Dorsolateral prefrontal cortex (tissue), 120 donors: ENCODE measurements at regions of chr11 and their contacts with region 1.

Region 1: DNA sequence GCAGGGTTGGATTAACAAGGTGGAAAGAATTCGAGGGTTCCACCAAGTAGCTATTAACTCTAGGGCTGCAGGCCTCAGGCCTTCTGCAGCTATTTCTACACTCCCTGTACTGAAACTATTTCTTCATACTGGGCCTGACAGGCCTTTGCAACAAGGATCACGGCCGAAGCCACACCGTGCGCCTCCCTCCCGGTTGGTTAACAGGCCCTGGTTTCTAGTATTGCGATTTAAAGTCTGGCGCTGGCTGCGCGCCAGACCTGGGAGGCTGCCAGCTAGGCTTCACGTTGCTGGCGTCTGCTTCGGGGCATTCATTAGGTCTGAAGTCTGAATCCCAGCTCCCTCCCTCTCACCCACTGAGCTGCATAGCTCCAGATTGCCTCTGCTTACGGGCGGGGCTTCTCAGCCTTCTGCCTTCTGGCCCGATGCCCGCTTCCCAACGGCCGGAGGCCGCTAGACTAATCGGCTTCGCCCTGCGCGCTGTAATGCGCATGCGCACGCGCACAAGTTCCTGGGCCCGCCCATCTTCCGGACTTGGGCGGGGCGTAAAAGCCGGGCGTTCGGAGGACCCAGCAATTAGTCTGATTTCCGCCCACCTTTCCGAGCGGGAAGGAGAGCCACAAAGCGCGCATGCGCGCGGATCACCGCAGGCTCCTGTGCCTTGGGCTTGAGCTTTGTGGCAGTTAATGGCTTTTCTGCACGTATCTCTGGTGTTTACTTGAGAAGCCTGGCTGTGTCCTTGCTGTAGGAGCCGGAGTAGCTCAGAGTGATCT is 1.6 kb downstream of the LDHA start:
- DNase-seq: peak; percentile 92 to 98 (median 96)
- H3K4me3 ChIP-seq: peak overlapping the region; percentile 65 to 97 (median 87)
- H3K27ac ChIP-seq: peak overlapping the region; percentile 32 to 98 (median 92)
- H3K27me3 ChIP-seq: no peaks in the 10 kb centered on the region
- CTCF ChIP-seq: peak in 22 of 56 donors; percentile 8 to 53 (median 24)

Region 2: GRCh38 chr11:18321980-18322711 is 73.8 kb before region 1 on chr11 and contains the starts of genes GTF2H1 and HPS5:
- intact Hi-C with region 1: loop called (anchors 2 to 5 kb)
- DNase-seq: peak; percentile 94 to 97 (median 96)
- H3K4me3 ChIP-seq: peak within 1 kb of the TSS; percentile 48 to 99 (median 92)
- H3K27ac ChIP-seq: peak within 1 kb of the TSS; percentile 91 to 100 (median 99)
- H3K27me3 ChIP-seq: no peaks in the 10 kb centered on the region
- CTCF ChIP-seq: peak in 13 of 56 donors; percentile 3 to 47 (median 17)
- total RNA-seq, gene GTF2H1: 30.5 to 68.1 (median 49.7) TPM
- total RNA-seq, gene HPS5: 12.8 to 35.8 (median 20.1) TPM

Region 3: DNA sequence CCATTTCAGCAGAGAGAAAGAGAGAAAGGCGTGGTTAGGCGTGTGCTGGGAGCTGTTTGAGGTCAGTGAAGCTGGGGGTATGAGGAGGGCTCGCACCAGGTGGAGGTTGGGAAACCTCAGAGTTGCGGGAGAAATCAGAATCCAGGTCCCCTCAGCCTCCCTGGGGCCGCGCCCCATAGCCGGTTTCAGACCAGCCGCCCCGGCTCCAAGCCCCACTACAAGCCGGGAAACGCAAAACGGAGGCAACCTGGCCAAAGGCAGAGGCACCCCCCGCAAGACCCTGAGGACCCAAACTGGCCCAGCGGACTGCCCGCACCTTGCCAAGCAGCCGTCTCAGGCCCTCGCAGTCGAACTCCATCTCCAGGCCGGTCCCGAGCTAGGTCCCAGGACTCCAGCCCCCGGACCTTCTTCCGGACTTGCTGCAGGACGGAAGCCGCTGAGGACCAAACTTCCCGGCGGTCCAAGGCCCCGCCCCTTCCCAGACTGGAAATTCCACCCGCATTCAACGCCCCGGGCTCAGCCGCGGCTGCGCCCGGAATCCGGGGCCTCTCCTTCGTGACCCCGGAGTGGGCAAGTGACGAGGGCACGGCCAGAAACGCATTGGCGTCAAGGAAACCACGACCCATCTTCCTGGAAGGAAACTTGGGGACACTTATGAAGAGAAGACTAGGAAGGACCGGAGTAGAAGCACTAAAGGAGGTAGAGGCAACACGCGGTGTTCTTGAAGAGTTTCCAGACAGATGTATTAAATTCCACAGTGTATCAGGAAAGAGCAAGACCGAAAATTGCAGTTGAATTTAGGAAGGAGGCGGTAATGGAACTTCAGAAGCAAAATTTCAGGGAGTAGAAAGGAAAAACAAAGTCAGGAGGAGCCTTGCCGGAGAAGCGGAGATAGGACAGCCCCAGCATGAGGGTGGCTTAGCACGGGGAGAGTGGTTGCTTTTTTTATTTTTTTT is 192.7 kb after region 1 on chr11 and contains the start of gene UEVLD:
- intact Hi-C with region 1: loop called in 1 of 2 experiments (anchors 5 kb)
- DNase-seq: peak; percentile 78 to 92 (median 84)
- H3K4me3 ChIP-seq: peak within 1 kb of the TSS; percentile 58 to 100 (median 90)
- H3K27ac ChIP-seq: peak within 1 kb of the TSS in 58 of 59 donors; percentile 16 to 90 (median 76)
- H3K27me3 ChIP-seq: no peaks in the 10 kb centered on the region
- CTCF ChIP-seq: peak in 33 of 56 donors; percentile 10 to 50 (median 25)
- total RNA-seq, gene UEVLD: 7.9 to 27.1 (median 16.5) TPM